ENCODE measurements at regions of chr5 and their contacts with region 1.

Region 1: GRCh38 chr5:74394916-74395781 is 245.4 kb downstream of the ENC1 start:
- DNase-seq: peak; percentile 39
- H3K4me3 ChIP-seq: no peak overlapping the region
- H3K27ac ChIP-seq: no peak overlapping the region
- H3K4me1 ChIP-seq: peaks cover 39% of the 10 kb centered on the region
- CTCF ChIP-seq: peak; percentile 55

Region 2: DNA sequence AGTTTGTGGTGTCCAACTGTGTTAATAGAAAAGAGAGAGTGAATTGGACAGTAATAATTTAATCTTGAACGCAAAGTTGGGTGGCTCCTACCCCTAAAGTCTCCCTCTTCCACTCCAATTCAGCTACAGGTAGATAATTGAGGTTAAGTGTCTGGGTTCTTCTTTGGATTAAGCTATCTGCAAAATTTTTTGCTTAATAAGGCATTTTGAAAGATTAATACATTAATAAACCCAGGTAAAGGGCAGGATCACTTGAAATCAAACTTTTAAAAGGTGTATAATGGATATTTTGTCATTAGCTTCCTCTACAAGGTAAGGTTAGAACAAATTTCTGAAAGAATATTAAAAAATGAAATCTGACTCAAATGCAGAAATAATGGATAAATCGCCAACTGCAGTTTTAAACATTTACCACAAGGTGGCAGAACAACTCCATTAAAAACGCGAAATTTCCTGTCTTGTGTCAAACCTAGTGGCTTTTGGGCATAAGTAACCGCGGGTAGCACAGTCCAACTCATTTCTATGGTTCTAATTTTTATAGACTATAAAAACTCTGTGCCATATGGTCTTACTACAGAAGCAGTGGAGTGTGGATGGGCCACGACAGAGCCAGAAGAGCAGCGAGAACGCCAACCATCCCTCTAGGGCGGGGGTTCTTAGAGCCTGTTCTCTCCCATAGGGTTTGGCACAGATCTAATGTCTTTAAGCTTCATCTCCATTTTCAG is 492.7 kb before region 1 on chr5:
- CTCF ChIA-PET with region 1: no interaction called
- POLR2A ChIA-PET with region 1: no interaction called
- intact Hi-C with region 1: loop called (anchors 5 kb)
- DNase-seq: peak; percentile 77
- H3K4me3 ChIP-seq: no peak overlapping the region
- H3K27ac ChIP-seq: no peak overlapping the region
- H3K4me1 ChIP-seq: peaks cover 4% of the 10 kb centered on the region
- CTCF ChIP-seq: peak; percentile 97

Region 3: GRCh38 chr5:74380193-74380592 is 15.0 kb before region 1 on chr5:
- CTCF ChIA-PET with region 1: no interaction called
- POLR2A ChIA-PET with region 1: interaction called, 10 read pairs
- intact Hi-C with region 1: no loop called
- DNase-seq: no peak
- H3K4me3 ChIP-seq: no peak overlapping the region
- H3K27ac ChIP-seq: no peak overlapping the region
- H3K4me1 ChIP-seq: no peaks in the 10 kb centered on the region
- CTCF ChIP-seq: no peak

Measured in OCI-LY7 (cell line).